ENCODE measurements at regions of chr9 and their contacts with region 1.

Region 1: GRCh38 chr9:127199001-127199791 is 65.4 kb upstream of the GARNL3 start:
- DNase-seq: peak; percentile 89
- H3K4me3 ChIP-seq: no peak overlapping the region
- H3K27ac ChIP-seq: peak overlapping the region; percentile 86 to 87
- H3K4me1 ChIP-seq: peaks cover 14 to 16% of the 10 kb centered on the region in 2 donors
- H3K27me3 ChIP-seq: no peaks in the 10 kb centered on the region
- CTCF ChIP-seq: peak; percentile 91 to 99 (median 96)
- POLR2A ChIP-seq: peak in 1 of 2 donors; percentile 10

Region 2: GRCh38 chr9:126939821-126940221 is 259.4 kb before region 1 on chr9:
- intact Hi-C with region 1: loop called (anchors 5 kb)
- DNase-seq: no peak
- H3K4me3 ChIP-seq: no peak overlapping the region
- H3K27ac ChIP-seq: no peak overlapping the region
- H3K4me1 ChIP-seq: no peaks in the 10 kb centered on the region
- H3K27me3 ChIP-seq: no peaks in the 10 kb centered on the region
- CTCF ChIP-seq: no peak
- POLR2A ChIP-seq: no peak

Region 3: GRCh38 chr9:127277099-127277498 is 77.9 kb after region 1 on chr9:
- intact Hi-C with region 1: no loop called
- DNase-seq: no peak
- H3K4me3 ChIP-seq: no peak overlapping the region
- H3K27ac ChIP-seq: peak overlapping the region in 1 of 2 donors; percentile 41
- H3K4me1 ChIP-seq: no peaks in the 10 kb centered on the region
- H3K27me3 ChIP-seq: no peaks in the 10 kb centered on the region
- CTCF ChIP-seq: no peak
- POLR2A ChIP-seq: no peak

Region 4: GRCh38 chr9:127598839-127599548 is 399.8 kb after region 1 on chr9:
- intact Hi-C with region 1: no loop called
- DNase-seq: no peak
- H3K4me3 ChIP-seq: no peak overlapping the region
- H3K27ac ChIP-seq: no peak overlapping the region
- H3K4me1 ChIP-seq: no peaks in the 10 kb centered on the region
- H3K27me3 ChIP-seq: no peaks in the 10 kb centered on the region
- CTCF ChIP-seq: no peak
- POLR2A ChIP-seq: no peak